Common myeloid progenitor, CD34-positive (primary cell): ENCODE measurements at regions of chr10 and their contacts with region 1.

Region 1: DNA sequence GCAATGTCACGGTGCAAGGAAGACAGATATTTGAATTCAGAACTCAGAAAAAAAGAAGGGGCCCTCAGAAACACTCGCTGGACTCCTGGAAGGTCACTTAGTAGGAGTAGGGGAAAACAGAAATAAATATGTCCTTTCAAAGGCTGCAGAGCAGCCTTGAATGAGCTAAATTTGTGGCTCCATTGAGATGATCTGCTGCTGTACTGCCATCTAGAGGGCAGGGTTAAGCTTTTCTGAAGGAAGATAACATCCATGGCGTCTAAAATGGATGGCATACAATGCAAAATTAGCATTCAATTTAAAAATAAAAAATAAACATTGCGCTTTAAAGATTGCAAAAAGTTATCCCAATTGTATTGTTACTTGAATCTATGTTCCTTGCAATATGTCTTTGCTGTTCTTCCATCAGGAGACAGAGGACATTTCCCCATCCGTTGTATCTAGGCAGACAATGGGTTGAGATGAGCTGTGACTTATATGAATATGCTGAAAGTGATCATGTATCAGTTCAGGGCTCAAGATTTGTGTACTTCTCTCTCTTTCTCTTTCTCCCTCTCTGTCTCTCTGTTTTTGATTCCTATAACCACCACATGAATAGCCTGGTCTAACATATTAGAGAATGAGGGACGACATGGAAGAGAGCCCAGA is 642.2 kb downstream of the SH2D4B start:
- DNase-seq: peak; percentile 17 to 53 (median 45)
- H3K4me3 ChIP-seq: no peak overlapping the region
- H3K27ac ChIP-seq: no peak overlapping the region
- H3K4me1 ChIP-seq: no peaks in the 10 kb centered on the region
- H3K27me3 ChIP-seq: no peaks in the 10 kb centered on the region

Region 2: DNA sequence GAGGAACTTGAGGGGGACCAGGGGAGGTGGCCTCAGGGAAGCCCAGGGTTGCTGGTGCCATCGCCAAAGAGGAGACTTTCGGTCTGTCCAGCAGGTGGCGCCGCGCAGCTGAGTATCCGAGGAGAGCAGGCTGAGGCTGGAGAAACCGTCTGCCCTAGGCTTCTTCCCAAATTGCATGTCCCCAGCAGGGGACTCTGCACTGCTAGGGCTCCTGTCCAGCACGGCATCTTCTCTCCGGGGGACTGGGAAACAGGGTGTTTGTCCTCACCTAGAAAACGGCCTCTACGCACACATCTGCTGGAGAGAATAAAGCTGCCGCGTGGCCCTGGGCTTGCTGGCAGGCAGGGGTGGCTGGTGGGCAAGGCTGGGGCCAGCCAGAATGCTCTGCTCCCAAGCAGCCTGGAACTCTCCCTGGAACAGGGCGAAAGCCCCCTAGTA is 480.3 kb before region 1 on chr10:
- CTCF ChIA-PET with region 1: interaction called, 12 read pairs
- POLR2A ChIA-PET with region 1: no interaction called
- DNase-seq: peak; percentile 61 to 75 (median 68)
- H3K4me3 ChIP-seq: no peak overlapping the region
- H3K27ac ChIP-seq: no peak overlapping the region
- H3K4me1 ChIP-seq: no peaks in the 10 kb centered on the region
- H3K27me3 ChIP-seq: peaks cover 0 to 2% (median 0%) of the 10 kb centered on the region in 5 experiments

Region 3: DNA sequence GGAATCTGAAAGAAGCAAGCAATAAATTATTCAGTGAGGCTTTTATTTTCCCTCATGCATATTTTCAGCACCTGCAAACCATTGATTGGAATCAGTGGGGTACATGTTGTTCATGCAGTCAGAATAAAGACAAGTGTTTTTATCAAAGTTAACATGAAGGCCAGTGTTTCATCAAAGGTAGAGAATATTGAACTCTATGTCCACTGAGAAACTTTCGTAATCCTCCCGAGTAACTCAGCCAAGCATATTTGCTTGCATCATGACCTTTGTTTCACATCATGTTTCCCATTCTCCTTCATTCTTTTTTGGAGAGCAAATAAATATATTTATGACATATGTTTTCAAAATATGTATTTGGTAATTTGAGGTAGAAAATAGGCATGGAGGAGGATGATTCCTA is 20.9 kb after region 1 on chr10:
- CTCF ChIA-PET with region 1: no interaction called
- POLR2A ChIA-PET with region 1: no interaction called
- DNase-seq: no peak
- H3K4me3 ChIP-seq: no peak overlapping the region
- H3K27ac ChIP-seq: no peak overlapping the region
- H3K4me1 ChIP-seq: no peaks in the 10 kb centered on the region
- H3K27me3 ChIP-seq: no peaks in the 10 kb centered on the region

Region 4: DNA sequence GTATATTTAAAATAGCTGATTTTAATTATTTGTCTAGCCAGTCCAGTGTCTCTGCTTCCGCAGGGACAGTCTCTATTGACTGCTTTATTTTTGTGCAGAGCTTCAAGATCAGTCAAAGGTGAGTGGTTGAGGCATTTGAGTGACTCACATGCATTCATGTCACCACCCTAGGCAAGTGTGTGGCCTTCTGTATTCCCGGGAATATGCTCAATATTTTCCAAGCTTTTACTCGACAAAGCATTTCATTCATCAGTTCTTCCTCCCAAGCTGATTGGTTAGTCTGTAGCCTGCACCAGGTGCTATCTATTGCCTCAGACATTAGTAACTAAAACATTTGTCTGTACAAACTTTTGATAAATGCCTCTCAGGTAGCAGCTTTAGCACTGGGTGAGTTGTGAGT is 223.5 kb after region 1 on chr10:
- CTCF ChIA-PET with region 1: no interaction called
- POLR2A ChIA-PET with region 1: no interaction called
- DNase-seq: no peak
- H3K4me3 ChIP-seq: no peak overlapping the region
- H3K27ac ChIP-seq: no peak overlapping the region
- H3K4me1 ChIP-seq: no peaks in the 10 kb centered on the region
- H3K27me3 ChIP-seq: no peaks in the 10 kb centered on the region